B cell (primary cell): ENCODE measurements at regions of chr5 and their contacts with region 1.

Region 1: GRCh38 chr5:114449860-114450421 is 88.1 kb downstream of the KCNN2 start:
- DNase-seq: peak; percentile 58
- ATAC-seq: peak; percentile 70
- H3K4me3 ChIP-seq: no peak overlapping the region
- H3K4me3 Mint-ChIP-seq: no peak overlapping the region
- H3K27ac ChIP-seq: no peak overlapping the region
- H3K27ac Mint-ChIP-seq: no peak overlapping the region
- H3K4me1 ChIP-seq: no peaks in the 10 kb centered on the region
- H3K4me1 Mint-ChIP-seq: peaks cover 3% of the 10 kb centered on the region
- H3K27me3 ChIP-seq: no peaks in the 10 kb centered on the region
- H3K27me3 Mint-ChIP-seq: no peaks in the 10 kb centered on the region
- CTCF ChIP-seq: peak; percentile 70

Region 2: DNA sequence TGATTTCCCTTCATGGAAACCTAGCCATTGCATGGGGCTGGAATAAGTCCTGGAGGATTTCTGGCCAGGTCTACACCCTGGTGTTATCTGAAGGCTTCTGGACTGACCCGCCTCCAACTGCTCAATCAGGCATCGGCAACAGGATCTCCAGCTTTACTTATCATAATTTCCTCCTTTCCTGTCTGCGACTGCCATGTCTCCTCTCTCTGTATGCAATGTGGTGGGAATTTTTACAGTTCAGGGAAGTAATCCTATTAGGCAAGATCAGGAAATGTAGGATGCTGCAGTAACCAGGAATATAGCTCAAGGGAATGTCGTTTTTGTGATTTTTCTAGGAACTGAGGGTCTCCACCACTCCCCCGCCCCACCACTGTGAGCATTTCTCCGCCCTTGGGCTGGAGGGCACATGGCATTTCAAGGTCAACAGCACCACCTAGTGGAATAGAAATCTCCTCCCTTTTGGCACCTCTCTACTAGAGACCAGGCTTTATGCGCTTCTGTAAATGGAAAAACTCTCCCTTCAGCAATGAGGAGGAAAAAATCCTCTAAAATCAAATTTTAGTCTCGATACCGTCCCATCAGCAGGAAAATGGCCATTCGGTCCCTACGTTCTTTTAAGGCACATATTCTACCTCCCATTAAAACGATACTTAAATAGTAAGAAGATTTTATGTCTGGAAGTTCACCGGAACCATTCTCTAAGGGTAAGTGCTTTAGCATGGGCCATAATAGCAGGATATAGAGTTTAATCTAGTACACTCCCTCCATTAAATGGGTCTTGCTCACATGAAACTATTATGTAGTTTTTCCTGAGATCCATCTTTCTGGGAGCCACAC is 843.4 kb before region 1 on chr5:
- CTCF ChIA-PET with region 1: interaction called, 79 read pairs
- POLR2A ChIA-PET with region 1: no interaction called
- intact Hi-C with region 1: no loop called
- DNase-seq: peak; percentile 61
- ATAC-seq: peak; percentile 57
- H3K4me3 ChIP-seq: no peak overlapping the region
- H3K4me3 Mint-ChIP-seq: no peak overlapping the region
- H3K27ac ChIP-seq: no peak overlapping the region
- H3K27ac Mint-ChIP-seq: no peak overlapping the region
- H3K4me1 ChIP-seq: peaks cover 0 to 3% of the 10 kb centered on the region in 2 donors
- H3K4me1 Mint-ChIP-seq: no peaks in the 10 kb centered on the region
- H3K27me3 ChIP-seq: peaks cover 0 to 21% (median 11%) of the 10 kb centered on the region in 4 experiments
- H3K27me3 Mint-ChIP-seq: peaks cover 37% of the 10 kb centered on the region
- CTCF ChIP-seq: peak; percentile 85

Region 3: GRCh38 chr5:113612060-113612496 is 837.9 kb before region 1 on chr5:
- CTCF ChIA-PET with region 1: interaction called, 79 read pairs
- POLR2A ChIA-PET with region 1: no interaction called
- intact Hi-C with region 1: no loop called
- DNase-seq: peak; percentile 51
- ATAC-seq: peak; percentile 43
- H3K4me3 ChIP-seq: no peak overlapping the region
- H3K4me3 Mint-ChIP-seq: no peak overlapping the region
- H3K27ac ChIP-seq: no peak overlapping the region
- H3K27ac Mint-ChIP-seq: no peak overlapping the region
- H3K4me1 ChIP-seq: peaks cover 0 to 3% of the 10 kb centered on the region in 2 donors
- H3K4me1 Mint-ChIP-seq: peaks cover 1% of the 10 kb centered on the region
- H3K27me3 ChIP-seq: peaks cover 0 to 6% (median 2%) of the 10 kb centered on the region in 4 experiments
- H3K27me3 Mint-ChIP-seq: peaks cover 28% of the 10 kb centered on the region
- CTCF ChIP-seq: peak; percentile 78

Region 4: DNA sequence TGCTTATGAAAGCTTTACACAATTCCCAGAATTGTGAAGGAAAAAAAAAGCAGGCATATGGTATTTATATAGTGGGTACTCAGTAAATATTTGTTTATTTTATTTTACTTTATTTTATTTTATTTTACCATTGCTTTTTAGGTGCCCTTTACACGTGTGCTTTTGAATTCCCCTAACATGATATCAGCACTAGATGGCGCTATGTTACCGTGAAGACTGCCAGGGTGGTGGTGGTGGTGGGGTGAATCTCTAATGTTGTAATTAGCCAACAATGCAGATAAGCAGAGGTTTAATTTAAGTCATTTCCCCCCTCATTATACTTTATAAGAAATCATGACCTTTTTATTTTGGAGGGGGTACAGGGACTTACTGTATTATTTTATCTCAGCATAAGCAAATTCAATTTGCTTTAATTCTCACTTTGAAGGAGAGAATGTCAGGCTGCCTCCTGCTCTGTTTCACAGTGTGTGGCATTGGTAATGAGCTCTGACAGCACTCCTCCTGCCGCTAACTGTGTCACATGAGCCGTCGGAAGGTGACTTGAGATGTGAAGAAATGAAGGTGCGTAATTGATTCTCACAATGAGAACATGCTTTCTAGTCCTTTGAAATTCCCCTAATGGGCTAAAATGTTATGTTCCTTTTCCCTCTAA is 770.9 kb before region 1 on chr5:
- CTCF ChIA-PET with region 1: interaction called, 16 read pairs
- POLR2A ChIA-PET with region 1: no interaction called
- intact Hi-C with region 1: no loop called
- DNase-seq: peak; percentile 10
- ATAC-seq: no peak
- H3K4me3 ChIP-seq: no peak overlapping the region
- H3K4me3 Mint-ChIP-seq: no peak overlapping the region
- H3K27ac ChIP-seq: no peak overlapping the region
- H3K27ac Mint-ChIP-seq: no peak overlapping the region
- H3K4me1 ChIP-seq: no peaks in the 10 kb centered on the region
- H3K4me1 Mint-ChIP-seq: no peaks in the 10 kb centered on the region
- H3K27me3 ChIP-seq: no peaks in the 10 kb centered on the region
- H3K27me3 Mint-ChIP-seq: peaks cover under 1% of the 10 kb centered on the region
- CTCF ChIP-seq: peak; percentile 50

Region 5: GRCh38 chr5:114296191-114296590 is 153.8 kb before region 1 on chr5:
- CTCF ChIA-PET with region 1: no interaction called
- POLR2A ChIA-PET with region 1: no interaction called
- intact Hi-C with region 1: no loop called
- DNase-seq: no peak
- ATAC-seq: no peak
- H3K4me3 ChIP-seq: no peak overlapping the region
- H3K4me3 Mint-ChIP-seq: no peak overlapping the region
- H3K27ac ChIP-seq: no peak overlapping the region
- H3K27ac Mint-ChIP-seq: no peak overlapping the region
- H3K4me1 ChIP-seq: no peaks in the 10 kb centered on the region
- H3K4me1 Mint-ChIP-seq: no peaks in the 10 kb centered on the region
- H3K27me3 ChIP-seq: no peaks in the 10 kb centered on the region
- H3K27me3 Mint-ChIP-seq: peaks cover 4% of the 10 kb centered on the region
- CTCF ChIP-seq: no peak

Region 6: DNA sequence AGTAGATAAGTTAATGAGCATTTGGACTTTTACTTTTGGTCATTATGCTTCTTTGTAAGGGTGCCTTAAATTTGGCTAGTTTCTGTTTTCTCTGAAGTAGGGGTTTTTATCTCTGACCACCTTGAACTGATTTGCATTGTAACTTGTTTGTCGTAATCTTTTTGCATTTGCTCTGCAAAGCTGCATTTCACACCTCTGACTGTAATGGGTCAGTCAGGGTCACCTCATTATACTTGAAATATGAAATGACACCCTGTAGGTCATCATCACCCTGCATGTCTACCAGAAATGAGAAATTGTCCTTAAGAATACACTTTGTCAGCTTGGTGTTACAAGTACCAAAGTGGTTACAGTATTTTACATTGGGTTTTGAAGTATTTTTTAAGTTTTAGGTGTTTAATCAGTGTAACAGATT is 14.0 kb before region 1 on chr5:
- CTCF ChIA-PET with region 1: interaction called, 10 read pairs
- POLR2A ChIA-PET with region 1: no interaction called
- intact Hi-C with region 1: no loop called
- DNase-seq: no peak
- ATAC-seq: no peak
- H3K4me3 ChIP-seq: no peak overlapping the region
- H3K4me3 Mint-ChIP-seq: no peak overlapping the region
- H3K27ac ChIP-seq: no peak overlapping the region
- H3K27ac Mint-ChIP-seq: no peak overlapping the region
- H3K4me1 ChIP-seq: no peaks in the 10 kb centered on the region
- H3K4me1 Mint-ChIP-seq: no peaks in the 10 kb centered on the region
- H3K27me3 ChIP-seq: peaks cover 0 to 4% (median 0%) of the 10 kb centered on the region in 4 experiments
- H3K27me3 Mint-ChIP-seq: peaks cover 15% of the 10 kb centered on the region
- CTCF ChIP-seq: no peak

Region 7: DNA sequence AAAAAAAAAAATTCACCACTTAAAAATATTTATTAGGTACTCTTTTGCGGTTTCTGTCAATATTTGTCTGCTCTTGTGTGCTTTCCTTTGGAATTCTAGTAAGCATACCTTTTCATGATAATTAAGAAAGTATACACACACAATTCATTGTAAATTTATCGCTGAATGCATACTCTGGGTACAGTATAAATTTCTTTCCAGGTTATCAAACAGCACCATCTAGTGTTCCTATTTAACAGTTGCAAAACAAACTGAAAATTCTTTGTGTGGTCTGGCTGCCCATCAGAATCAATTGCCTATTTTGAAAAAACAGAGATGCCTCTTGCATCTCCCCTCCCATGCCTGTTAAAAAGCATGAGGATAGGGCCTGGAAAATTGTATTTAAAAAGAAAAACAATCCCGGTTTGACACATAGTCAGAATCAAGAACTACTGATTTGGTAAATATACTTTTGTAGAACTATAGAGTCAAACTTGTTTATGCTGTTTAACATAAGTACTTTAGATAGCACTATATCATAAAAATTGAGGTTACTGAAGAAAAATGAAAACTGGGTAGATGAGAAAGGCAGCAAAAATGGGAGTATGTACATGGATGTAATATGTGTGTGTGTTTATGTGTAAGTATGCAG is 796.5 kb after region 1 on chr5:
- CTCF ChIA-PET with region 1: interaction called, 3 read pairs
- POLR2A ChIA-PET with region 1: no interaction called
- intact Hi-C with region 1: loop called (anchors 5 kb)
- DNase-seq: peak; percentile 58
- ATAC-seq: peak; percentile 53
- H3K4me3 ChIP-seq: no peak overlapping the region
- H3K4me3 Mint-ChIP-seq: no peak overlapping the region
- H3K27ac ChIP-seq: no peak overlapping the region
- H3K27ac Mint-ChIP-seq: no peak overlapping the region
- H3K4me1 ChIP-seq: no peaks in the 10 kb centered on the region
- H3K4me1 Mint-ChIP-seq: peaks cover 15% of the 10 kb centered on the region
- H3K27me3 ChIP-seq: no peaks in the 10 kb centered on the region
- H3K27me3 Mint-ChIP-seq: no peaks in the 10 kb centered on the region
- CTCF ChIP-seq: peak; percentile 93